Activated T-helper 1 cell treated with anti-CD3 and anti-CD28 coated beads, Interleukin-12 subunit alpha, Interleukin-12 subunit beta, Interleukin-2, Interleukin-4 antibody, amounts not matched to agents 30 ng/mL and 10 ng/mL and 1 ng/mL, durations not matched to agents 14 hours and 24 hours and 36 hours (primary cell): ENCODE measurements at regions of chrX and their contacts with region 1.

Region 1: GRCh38 chrX:136652822-136653723 is 5.1 kb downstream of the CD40LG start:
- DNase-seq: no peak
- H3K4me3 Mint-ChIP-seq: peak overlapping the region; percentile 99
- H3K27ac Mint-ChIP-seq: peak overlapping the region; percentile 94
- H3K4me1 Mint-ChIP-seq: peaks cover 64% of the 10 kb centered on the region
- H3K27me3 Mint-ChIP-seq: no peaks in the 10 kb centered on the region

Region 2: GRCh38 chrX:136616987-136617685 is 35.9 kb before region 1 on chrX:
- intact Hi-C with region 1: loop called (anchors 1 kb)
- DNase-seq: no peak
- H3K4me3 Mint-ChIP-seq: peak overlapping the region; percentile 47
- H3K27ac Mint-ChIP-seq: peak overlapping the region; percentile 85
- H3K4me1 Mint-ChIP-seq: peaks cover 53% of the 10 kb centered on the region
- H3K27me3 Mint-ChIP-seq: no peaks in the 10 kb centered on the region

Region 3: DNA sequence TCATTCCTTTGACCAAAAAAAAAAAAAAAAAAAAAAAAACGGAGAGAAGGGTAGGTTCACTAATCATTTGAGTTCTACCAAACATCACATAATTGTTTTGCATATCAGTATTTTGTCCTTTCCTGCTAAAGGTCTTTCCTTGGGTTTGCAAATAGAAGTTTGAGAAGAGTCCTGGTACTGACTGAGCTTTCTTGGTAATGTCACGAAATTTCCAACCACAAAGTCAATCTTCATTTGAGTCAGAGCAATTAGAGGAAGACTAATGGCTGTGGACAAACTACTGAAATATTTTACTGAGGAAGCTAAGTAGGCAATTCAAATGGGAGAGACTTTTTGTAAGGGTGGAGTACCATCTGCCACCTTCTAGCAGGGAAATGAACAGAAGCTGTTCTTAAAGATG is 26.8 kb before region 1 on chrX:
- intact Hi-C with region 1: loop called (anchors 1 kb)
- DNase-seq: no peak
- H3K4me3 Mint-ChIP-seq: peak overlapping the region; percentile 30
- H3K27ac Mint-ChIP-seq: peak overlapping the region; percentile 85
- H3K4me1 Mint-ChIP-seq: peaks cover 94% of the 10 kb centered on the region
- H3K27me3 Mint-ChIP-seq: no peaks in the 10 kb centered on the region

Region 4: GRCh38 chrX:136674270-136674985 is 21.4 kb after region 1 on chrX:
- intact Hi-C with region 1: loop called (anchors 1 kb)
- DNase-seq: no peak
- H3K4me3 Mint-ChIP-seq: peak overlapping the region; percentile 64
- H3K27ac Mint-ChIP-seq: peak overlapping the region; percentile 97
- H3K4me1 Mint-ChIP-seq: peaks cover 70% of the 10 kb centered on the region
- H3K27me3 Mint-ChIP-seq: no peaks in the 10 kb centered on the region